IMR-90 (cell line): ENCODE measurements at regions of chr13 and their contacts with region 1.

Region 1: DNA sequence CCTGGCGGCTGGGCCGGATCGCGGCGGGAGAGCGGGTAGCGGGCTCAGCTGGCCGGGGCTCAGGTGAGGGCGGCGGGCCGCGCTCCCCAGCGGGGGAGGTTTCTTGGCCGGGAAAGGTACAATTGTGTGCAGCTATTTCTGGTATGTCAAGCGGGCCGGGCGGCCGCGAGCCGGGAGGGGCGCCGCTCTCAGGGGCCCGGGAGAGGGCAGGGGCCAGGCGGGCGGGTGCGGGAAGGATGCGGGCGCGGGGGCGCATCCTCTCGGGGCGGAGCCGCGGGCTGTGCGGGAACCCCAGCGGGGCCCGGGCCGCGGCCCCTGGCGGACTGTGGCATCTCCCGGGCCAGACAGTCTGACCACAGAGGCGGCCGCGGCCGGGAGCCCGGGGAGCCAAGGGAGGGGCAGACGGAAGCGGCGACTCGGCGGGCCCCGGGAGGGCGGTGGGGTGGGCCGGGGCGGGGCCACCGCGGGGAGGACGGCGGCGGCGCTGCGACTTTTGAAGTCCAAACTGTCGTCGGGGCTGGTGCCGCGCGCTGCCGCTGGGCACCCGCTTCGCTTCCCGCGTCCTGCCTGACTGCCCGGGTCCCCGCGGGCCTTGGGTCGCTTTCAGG is at the start of gene LMO7:
- DNase-seq: peak; percentile 52
- ATAC-seq: peak; percentile 68
- H3K4me3 ChIP-seq: peak within 1 kb of the TSS; percentile 80
- H3K27ac ChIP-seq: peak within 1 kb of the TSS; percentile 86
- H3K4me1 ChIP-seq: peaks cover 20% of the 10 kb centered on the region
- H3K27me3 ChIP-seq: no peaks in the 10 kb centered on the region
- CTCF ChIP-seq: no peak
- POLR2A ChIP-seq: no peak
- RAD21 ChIP-seq: no peak
- total RNA-seq, gene LMO7: 367 and 485 TPM in 2 replicates

Region 2: DNA sequence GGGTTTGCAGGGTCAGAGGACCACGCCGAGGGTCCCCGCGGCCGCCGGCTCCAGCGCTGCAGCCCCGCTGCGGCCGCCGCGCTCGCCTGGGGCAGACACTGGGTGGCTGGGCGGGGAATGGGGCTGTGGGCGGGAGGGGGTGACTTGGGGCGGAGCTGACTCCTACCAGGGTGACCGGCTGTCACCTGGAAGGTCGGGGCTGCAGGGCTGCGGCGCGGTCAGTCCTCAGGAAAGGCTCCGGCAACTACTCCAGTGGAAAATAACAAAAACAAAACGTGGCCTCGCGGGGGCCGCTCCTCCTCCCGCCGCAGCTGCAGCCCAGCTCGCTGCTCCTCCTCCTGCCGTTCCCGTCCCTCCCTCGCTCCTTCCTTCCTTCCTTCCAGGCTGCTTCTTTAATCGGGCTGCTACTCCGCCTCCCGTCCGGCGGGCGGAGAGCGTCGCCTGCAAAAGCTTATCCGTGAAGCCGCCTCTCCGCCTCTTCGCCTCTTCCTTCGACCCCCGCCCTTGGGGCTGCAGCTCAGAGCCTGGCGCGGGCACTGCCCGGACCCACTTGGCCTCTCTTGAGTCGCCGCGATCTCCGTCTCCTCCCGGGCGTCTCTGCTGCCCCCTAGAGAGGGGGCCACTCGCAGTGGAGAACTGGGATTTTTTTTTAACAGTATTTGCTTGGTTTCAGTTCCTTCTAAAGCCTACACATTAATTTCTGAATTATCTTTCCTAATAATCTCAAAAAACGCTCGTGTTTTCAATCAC is 153.7 kb before region 1 on chr13 and contains the start of gene TBC1D4:
- CTCF ChIA-PET with region 1: no interaction called
- POLR2A ChIA-PET with region 1: no interaction called
- dilution Hi-C with region 1: no loop called
- in situ Hi-C with region 1: no loop called
- intact Hi-C with region 1: loop called (anchors 2 kb)
- DNase-seq: peak; percentile 82
- ATAC-seq: peak; percentile 86
- H3K4me3 ChIP-seq: peak within 1 kb of the TSS; percentile 49
- H3K27ac ChIP-seq: peak within 1 kb of the TSS; percentile 25
- H3K4me1 ChIP-seq: peaks cover 3% of the 10 kb centered on the region; the same call in 1 of the 2 replicates
- H3K27me3 ChIP-seq: no peaks in the 10 kb centered on the region
- CTCF ChIP-seq: peak; percentile 84
- POLR2A ChIP-seq: 0 out of 2 replicates have a peak, but pooled peaks have one; percentile 39
- RAD21 ChIP-seq: peak; percentile 57
- total RNA-seq, gene TBC1D4: 11.4 and 22.8 TPM in 2 replicates

Region 3: GRCh38 chr13:75724752-75725504 is 89.0 kb after region 1 on chr13:
- CTCF ChIA-PET with region 1: no interaction called
- POLR2A ChIA-PET with region 1: no interaction called
- dilution Hi-C with region 1: no loop called
- in situ Hi-C with region 1: no loop called
- intact Hi-C with region 1: no loop called
- DNase-seq: no peak
- ATAC-seq: no peak; the same call in 1 of the 2 replicates
- H3K4me3 ChIP-seq: no peak overlapping the region
- H3K27ac ChIP-seq: peak overlapping the region; percentile 9; the same call in 1 of the 2 replicates
- H3K4me1 ChIP-seq: peaks cover 8% of the 10 kb centered on the region
- H3K27me3 ChIP-seq: no peaks in the 10 kb centered on the region
- CTCF ChIP-seq: no peak
- POLR2A ChIP-seq: no peak
- RAD21 ChIP-seq: no peak

Region 4: DNA sequence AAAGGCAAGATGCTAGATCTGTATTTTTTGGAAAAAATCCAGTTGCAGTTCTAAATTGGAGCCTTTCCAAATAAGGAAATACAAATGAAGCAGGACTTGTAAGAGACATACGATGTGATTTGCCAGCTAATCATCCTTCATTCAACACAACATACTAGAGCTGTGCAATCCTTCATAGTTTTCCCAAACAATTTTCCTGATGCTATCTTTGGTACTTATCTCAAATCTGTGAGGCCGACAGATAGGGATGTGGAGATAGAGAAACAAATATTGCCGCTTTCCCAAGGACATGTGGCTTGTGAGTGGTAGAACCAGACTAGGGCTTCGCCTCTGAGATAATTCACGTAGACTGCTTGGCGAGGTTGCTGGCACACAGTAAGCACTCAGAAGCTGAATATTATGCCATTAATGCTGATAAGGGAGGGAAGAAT is 176.8 kb after region 1 on chr13:
- CTCF ChIA-PET with region 1: no interaction called
- POLR2A ChIA-PET with region 1: no interaction called
- dilution Hi-C with region 1: no loop called
- in situ Hi-C with region 1: no loop called
- intact Hi-C with region 1: no loop called
- DNase-seq: peak; percentile 35
- ATAC-seq: no peak
- H3K4me3 ChIP-seq: no peak overlapping the region
- H3K27ac ChIP-seq: peak overlapping the region; percentile 40; the same call in 1 of the 2 replicates
- H3K4me1 ChIP-seq: peaks cover 12% of the 10 kb centered on the region
- H3K27me3 ChIP-seq: no peaks in the 10 kb centered on the region
- CTCF ChIP-seq: no peak
- POLR2A ChIP-seq: no peak
- RAD21 ChIP-seq: no peak

Region 5: DNA sequence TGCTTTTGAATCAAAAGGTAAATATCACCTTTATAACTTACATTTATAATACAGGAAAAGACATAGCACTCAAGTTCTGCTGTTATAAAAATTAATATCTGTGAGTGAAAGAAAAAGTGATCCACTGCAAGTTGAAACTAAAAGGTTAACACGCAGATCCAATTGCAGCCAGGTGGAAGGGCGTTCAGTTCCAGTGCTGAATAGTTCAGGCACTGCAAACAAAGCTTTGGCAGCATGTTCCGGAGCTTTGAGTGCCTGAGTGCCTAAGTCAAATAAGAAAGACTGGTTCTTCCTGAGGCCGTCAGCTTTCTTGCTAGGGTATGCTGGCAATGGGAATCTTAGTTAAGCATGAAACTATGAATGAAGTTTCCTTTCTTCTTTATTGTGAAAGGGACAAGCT is 200.5 kb after region 1 on chr13:
- CTCF ChIA-PET with region 1: no interaction called
- POLR2A ChIA-PET with region 1: no interaction called
- dilution Hi-C with region 1: no loop called
- in situ Hi-C with region 1: no loop called
- intact Hi-C with region 1: no loop called
- DNase-seq: no peak
- ATAC-seq: no peak
- H3K4me3 ChIP-seq: no peak overlapping the region
- H3K27ac ChIP-seq: no peak overlapping the region
- H3K4me1 ChIP-seq: no peaks in the 10 kb centered on the region
- H3K27me3 ChIP-seq: no peaks in the 10 kb centered on the region
- CTCF ChIP-seq: no peak
- POLR2A ChIP-seq: no peak
- RAD21 ChIP-seq: no peak